Activated T-helper 1 cell treated with anti-CD3 and anti-CD28 coated beads, Interleukin-12 subunit alpha, Interleukin-12 subunit beta, Interleukin-2, Interleukin-4 antibody, amounts not matched to agents 30 ng/mL and 10 ng/mL and 1 ng/mL, durations not matched to agents 14 hours and 24 hours and 36 hours (primary cell): ENCODE measurements at regions of chr5 and their contacts with region 1.

Region 1: GRCh38 chr5:132495667-132496190 is 5.2 kb upstream of the IRF1 start:
- DNase-seq: peak; percentile 72
- H3K4me3 Mint-ChIP-seq: peak overlapping the region; percentile 93
- H3K27ac Mint-ChIP-seq: peak overlapping the region; percentile 90
- H3K4me1 Mint-ChIP-seq: peaks cover 80% of the 10 kb centered on the region
- H3K27me3 Mint-ChIP-seq: peaks cover 1% of the 10 kb centered on the region

Region 2: GRCh38 chr5:132180134-132180745 is 315.5 kb before region 1 on chr5:
- intact Hi-C with region 1: loop called (anchors 5 kb)
- DNase-seq: no peak
- H3K4me3 Mint-ChIP-seq: no peak overlapping the region
- H3K27ac Mint-ChIP-seq: peak overlapping the region; percentile 25
- H3K4me1 Mint-ChIP-seq: peaks cover 45% of the 10 kb centered on the region
- H3K27me3 Mint-ChIP-seq: no peaks in the 10 kb centered on the region

Region 3: GRCh38 chr5:132386644-132387286 is 109.0 kb before region 1 on chr5:
- intact Hi-C with region 1: loop called (anchors 1 kb)
- DNase-seq: peak; percentile 72
- H3K4me3 Mint-ChIP-seq: no peak overlapping the region
- H3K27ac Mint-ChIP-seq: peak overlapping the region; percentile 54
- H3K4me1 Mint-ChIP-seq: peaks cover 61% of the 10 kb centered on the region
- H3K27me3 Mint-ChIP-seq: peaks cover 3% of the 10 kb centered on the region

Region 4: DNA sequence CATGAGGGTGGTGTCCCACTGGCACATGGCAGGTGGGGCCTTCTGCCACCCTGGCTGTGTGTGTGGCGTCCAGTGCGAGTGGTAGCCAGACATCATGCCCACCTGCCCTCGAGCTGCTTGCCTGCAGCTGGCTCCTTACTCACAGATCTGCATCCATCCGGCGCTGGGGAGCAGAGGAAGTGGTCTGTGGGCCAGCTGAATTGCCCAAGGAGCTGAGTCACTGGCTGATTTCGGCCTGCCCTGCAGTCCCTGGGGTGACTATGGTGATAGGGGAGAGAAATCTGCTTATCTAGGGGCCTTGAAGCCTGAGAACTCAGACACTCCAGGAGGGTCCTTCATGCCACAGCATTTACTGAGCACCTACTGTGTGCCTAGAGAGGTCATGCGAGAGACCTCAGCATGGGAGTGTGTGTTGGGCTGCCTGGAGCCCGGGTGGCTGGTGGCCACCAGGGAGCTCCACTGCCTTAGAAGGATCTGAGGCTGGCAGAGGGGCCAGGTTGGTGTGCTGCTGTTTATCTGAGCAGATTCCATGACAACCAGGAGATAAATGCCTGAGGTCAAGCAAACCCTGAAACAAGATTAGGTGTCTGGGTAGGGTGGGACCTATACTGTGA is 69.1 kb before region 1 on chr5:
- intact Hi-C with region 1: loop called (anchors 1 kb)
- DNase-seq: peak; percentile 67
- H3K4me3 Mint-ChIP-seq: peak overlapping the region; percentile 72
- H3K27ac Mint-ChIP-seq: peak overlapping the region; percentile 98
- H3K4me1 Mint-ChIP-seq: peaks cover 97% of the 10 kb centered on the region
- H3K27me3 Mint-ChIP-seq: no peaks in the 10 kb centered on the region

Region 5: GRCh38 chr5:132466433-132467286 is 29.1 kb before region 1 on chr5:
- intact Hi-C with region 1: loop called (anchors 1 kb)
- DNase-seq: peak; percentile 71
- H3K4me3 Mint-ChIP-seq: peak overlapping the region; percentile 77
- H3K27ac Mint-ChIP-seq: peak overlapping the region; percentile 97
- H3K4me1 Mint-ChIP-seq: peaks cover 94% of the 10 kb centered on the region
- H3K27me3 Mint-ChIP-seq: no peaks in the 10 kb centered on the region

Region 6: DNA sequence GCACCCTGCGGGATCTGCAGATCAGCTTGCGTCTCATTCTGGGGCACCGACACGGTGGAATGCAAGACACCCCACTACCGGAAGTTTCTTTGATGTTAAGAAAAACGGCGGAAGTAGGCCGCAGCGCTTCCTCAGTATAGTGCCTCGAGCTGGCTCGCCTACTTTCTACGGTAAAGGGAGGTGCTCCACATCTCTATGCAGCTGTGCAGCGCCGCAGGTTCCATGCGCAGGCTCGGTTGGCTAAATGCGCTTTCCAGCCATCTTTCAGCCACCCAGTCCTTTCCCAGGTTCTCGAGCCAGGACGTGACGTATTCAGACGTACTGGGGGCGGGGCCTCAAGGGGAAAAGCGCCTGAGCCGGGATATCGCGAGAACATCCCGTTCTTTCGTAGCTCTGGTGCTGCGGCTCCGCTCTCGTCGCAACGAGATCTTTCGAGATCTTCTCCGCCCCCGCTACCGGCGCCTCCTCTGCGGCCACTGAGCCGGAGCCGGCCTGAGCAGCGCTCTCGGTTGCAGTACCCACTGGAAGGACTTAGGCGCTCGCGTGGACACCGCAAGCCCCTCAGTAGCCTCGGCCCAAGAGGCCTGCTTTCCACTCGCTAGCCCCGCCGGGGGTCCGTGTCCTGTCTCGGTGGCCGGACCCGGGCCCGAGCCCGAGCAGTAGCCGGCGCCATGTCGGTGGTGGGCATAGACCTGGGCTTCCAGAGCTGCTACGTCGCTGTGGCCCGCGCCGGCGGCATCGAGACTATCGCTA is 556.0 kb after region 1 on chr5 and contains the start of gene HSPA4:
- intact Hi-C with region 1: loop called (anchors 5 kb)
- DNase-seq: peak; percentile 96
- H3K4me3 Mint-ChIP-seq: peak within 1 kb of the TSS; percentile 96
- H3K27ac Mint-ChIP-seq: peak within 1 kb of the TSS; percentile 100
- H3K4me1 Mint-ChIP-seq: peaks cover 46% of the 10 kb centered on the region
- H3K27me3 Mint-ChIP-seq: peaks cover 2% of the 10 kb centered on the region
- total RNA-seq, gene HSPA4: 244 and 247 TPM in 2 replicates